ENCODE measurements at regions of chr13 and their contacts with region 1.

Region 1: DNA sequence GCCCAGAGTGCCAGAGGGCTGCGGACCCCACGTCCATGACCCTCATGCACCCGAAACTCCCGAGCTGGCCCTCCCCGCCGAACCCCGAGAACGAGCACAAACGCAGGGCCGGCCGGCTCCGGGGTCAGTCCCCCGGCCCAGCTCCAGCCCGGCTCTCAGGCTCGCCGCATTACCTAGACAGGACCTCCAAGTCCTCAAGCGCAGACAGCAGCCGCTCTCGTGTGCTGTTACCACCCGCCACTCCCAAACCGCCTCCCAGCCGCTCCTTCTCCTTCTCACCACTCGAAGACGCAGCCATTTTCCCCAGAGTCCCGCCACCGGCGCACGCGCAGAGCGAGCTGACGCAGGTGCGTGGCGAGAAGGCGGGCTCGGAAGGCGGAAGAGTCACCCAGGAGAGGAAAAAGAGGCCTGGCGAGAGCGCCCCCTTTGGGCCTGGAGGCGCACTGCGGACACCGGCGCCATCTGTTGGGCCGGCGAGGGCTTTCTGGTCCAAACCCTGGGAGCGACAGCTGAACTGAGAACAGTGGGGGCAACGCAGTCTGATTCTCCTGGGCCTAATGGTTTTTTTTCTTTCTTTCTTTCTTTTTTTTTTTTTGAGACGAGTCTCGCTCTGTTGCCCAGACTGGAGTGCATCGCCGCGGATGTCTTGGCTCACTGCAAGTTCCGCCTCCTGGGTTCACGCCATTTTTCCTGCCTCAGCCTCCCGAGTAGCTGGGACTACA is at the start of gene MED4:
- DNase-seq: peak; percentile 96
- H3K4me3 ChIP-seq: peak within 1 kb of the TSS; percentile 96 to 98
- H3K27ac ChIP-seq: peak within 1 kb of the TSS; percentile 59 to 70
- H3K4me1 ChIP-seq: peaks cover 5 to 13% of the 10 kb centered on the region in 2 experiments; a peak in 3 of 4 replicates
- H3K27me3 ChIP-seq: no peaks in the 10 kb centered on the region
- CTCF ChIP-seq: peak; percentile 99
- EP300 ChIP-seq: no peak; a peak in 1 of 4 replicates
- RAD21 ChIP-seq: peak; percentile 46
- polyA plus RNA-seq, gene MED4: 42.2 and 56.9 TPM in 2 replicates

Region 2: GRCh38 chr13:48037346-48038173 is 57.4 kb before region 1 on chr13 and contains the start of gene NUDT15:
- CTCF ChIA-PET with region 1: interaction called, 6 read pairs
- POLR2A ChIA-PET with region 1: interaction called, 10 read pairs
- DNase-seq: peak; percentile 93
- H3K4me3 ChIP-seq: peak within 1 kb of the TSS; percentile 71 to 86
- H3K27ac ChIP-seq: peak within 1 kb of the TSS; percentile 95 to 97
- H3K4me1 ChIP-seq: peaks cover 8 to 10% of the 10 kb centered on the region in 2 experiments; a peak in 3 of 4 replicates
- H3K27me3 ChIP-seq: no peaks in the 10 kb centered on the region
- CTCF ChIP-seq: peak; percentile 98
- EP300 ChIP-seq: peak; percentile 14 to 18; a peak in 1 of 4 replicates
- RAD21 ChIP-seq: peak; percentile 51
- polyA plus RNA-seq, gene NUDT15: 11.9 and 13.8 TPM in 2 replicates

Measured in SK-N-SH (cell line).